ENCODE measurements at regions of chr2 and their contacts with region 1.

Region 1: GRCh38 chr2:20650880-20651730 is at the start of gene HS1BP3:
- DNase-seq: peak; percentile 97
- ATAC-seq: peak; percentile 95
- H3K4me3 Mint-ChIP-seq: peak within 1 kb of the TSS; percentile 87
- H3K27ac Mint-ChIP-seq: peak within 1 kb of the TSS; percentile 94
- H3K4me1 Mint-ChIP-seq: peaks cover 41% of the 10 kb centered on the region
- H3K27me3 Mint-ChIP-seq: peaks cover 3% of the 10 kb centered on the region
- CTCF ChIP-seq: no peak
- total RNA-seq, gene HS1BP3: 13.0 and 13.1 TPM in 2 replicates

Region 2: DNA sequence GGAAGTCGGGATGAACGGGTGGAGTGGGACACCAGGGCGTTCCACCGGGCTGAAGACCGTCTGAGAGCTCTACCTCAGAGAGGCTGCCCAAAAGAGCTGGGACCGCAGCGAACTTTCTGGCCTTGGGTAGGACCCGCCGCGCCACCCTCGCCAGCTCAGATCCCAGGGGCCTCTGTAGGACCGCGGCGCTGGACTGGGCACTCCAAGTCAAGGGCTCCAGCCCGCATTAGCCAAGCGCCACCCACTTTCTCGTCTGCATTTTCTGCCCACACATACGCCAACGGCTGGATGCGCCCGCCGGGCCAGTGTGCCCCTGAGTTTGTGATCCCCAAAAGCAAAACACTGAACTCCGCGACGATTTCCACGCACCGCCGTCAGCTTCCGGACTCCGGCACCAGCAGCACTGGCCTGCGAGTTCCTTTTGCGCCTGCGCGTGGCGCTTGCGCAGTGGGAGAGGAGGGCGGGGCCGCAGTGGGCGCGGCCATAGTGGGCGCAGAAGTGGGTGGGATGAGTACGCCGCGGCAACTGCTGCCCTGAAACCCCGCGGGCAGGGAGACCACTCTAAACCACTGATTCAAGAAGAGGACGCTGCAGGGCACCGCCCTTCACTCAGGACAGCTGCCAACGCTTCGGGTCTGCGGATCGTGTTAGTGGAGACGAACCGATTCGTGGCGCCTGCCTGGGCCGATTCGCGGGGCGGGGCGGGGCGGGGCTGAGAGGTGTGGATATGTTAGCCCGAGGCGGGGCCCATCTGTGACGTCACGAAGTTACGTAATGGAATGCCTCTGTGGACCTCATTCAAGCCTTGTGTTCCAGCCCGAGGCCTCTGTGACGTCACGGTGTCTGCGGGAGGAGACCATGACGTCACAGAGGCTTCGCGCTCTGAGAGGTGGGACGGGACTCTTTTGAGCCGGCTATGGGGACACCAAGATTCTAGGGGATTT is 1303.2 kb before region 1 on chr2:
- CTCF ChIA-PET with region 1: no interaction called
- POLR2A ChIA-PET with region 1: no interaction called
- intact Hi-C with region 1: loop called (anchors 5 kb)
- DNase-seq: peak; percentile 100
- ATAC-seq: peak; percentile 89
- H3K4me3 Mint-ChIP-seq: peak overlapping the region; percentile 98
- H3K27ac Mint-ChIP-seq: peak overlapping the region; percentile 98
- H3K4me1 Mint-ChIP-seq: peaks cover 35% of the 10 kb centered on the region
- H3K27me3 Mint-ChIP-seq: peaks cover 28% of the 10 kb centered on the region
- CTCF ChIP-seq: no peak

Region 3: GRCh38 chr2:20225294-20226151 is 425.6 kb before region 1 on chr2:
- CTCF ChIA-PET with region 1: no interaction called
- POLR2A ChIA-PET with region 1: no interaction called
- intact Hi-C with region 1: loop called (anchors 10 kb)
- DNase-seq: peak; percentile 33
- ATAC-seq: peak; percentile 62
- H3K4me3 Mint-ChIP-seq: peak overlapping the region; percentile 66
- H3K27ac Mint-ChIP-seq: no peak overlapping the region
- H3K4me1 Mint-ChIP-seq: peaks cover 12% of the 10 kb centered on the region
- H3K27me3 Mint-ChIP-seq: peaks cover 45% of the 10 kb centered on the region
- CTCF ChIP-seq: no peak

Region 4: GRCh38 chr2:20595431-20596192 is 55.5 kb before region 1 on chr2:
- CTCF ChIA-PET with region 1: interaction called, 4 read pairs
- POLR2A ChIA-PET with region 1: no interaction called
- intact Hi-C with region 1: loop called (anchors 2 kb)
- DNase-seq: peak; percentile 45
- ATAC-seq: peak; percentile 83
- H3K4me3 Mint-ChIP-seq: peak overlapping the region; percentile 72
- H3K27ac Mint-ChIP-seq: peak overlapping the region; percentile 82
- H3K4me1 Mint-ChIP-seq: peaks cover 38% of the 10 kb centered on the region
- H3K27me3 Mint-ChIP-seq: peaks cover 21% of the 10 kb centered on the region
- CTCF ChIP-seq: no peak

Region 5: DNA sequence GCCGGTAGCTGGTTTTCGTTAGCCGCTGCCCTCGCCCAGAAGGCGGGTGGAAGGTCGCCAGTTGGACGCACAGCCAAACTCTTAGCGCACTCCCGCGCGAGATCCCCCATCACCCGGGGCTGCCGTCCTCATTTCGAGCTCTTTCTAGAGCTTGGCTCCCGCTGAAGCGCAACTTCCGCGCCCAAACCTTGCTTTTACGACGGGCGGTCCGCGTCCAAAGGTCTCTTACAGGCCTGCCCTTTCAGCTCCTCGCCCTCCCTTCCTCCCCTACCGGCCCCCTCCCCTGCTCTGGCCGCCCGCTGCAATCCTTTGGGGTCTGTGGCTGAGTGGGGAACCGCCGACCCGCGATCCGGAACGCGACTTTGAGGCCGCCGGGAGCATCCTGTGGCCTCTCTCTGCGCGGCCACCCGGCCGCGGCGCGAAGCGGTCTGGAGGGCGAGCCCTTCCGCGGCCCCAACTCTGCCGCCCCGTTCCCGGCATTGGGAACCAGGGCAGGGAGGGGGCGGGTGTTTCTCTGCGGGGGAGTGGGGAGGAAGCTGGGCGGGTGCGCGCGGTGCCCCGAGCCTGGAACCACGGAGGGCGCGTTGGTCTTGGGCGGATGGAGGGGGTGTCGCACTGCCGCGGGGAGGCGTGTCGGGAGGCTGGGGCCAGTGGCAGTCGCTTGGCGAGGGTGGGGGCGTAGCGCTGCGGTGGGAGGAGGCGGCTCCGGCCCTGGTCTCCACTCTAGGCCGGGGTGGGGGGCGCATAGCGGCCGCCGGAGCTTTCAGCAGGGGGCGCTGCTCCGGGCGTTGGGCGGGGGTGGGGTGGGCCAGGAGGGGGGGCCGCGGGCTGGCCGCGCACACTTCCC is 15.4 kb after region 1 on chr2 and contains the start of gene GDF7:
- CTCF ChIA-PET with region 1: interaction called, 36 read pairs
- POLR2A ChIA-PET with region 1: interaction called, 36 read pairs
- intact Hi-C with region 1: loop called (anchors 1 kb)
- DNase-seq: peak; percentile 67
- ATAC-seq: peak; percentile 78
- H3K4me3 Mint-ChIP-seq: peak within 1 kb of the TSS; percentile 87
- H3K27ac Mint-ChIP-seq: peak within 1 kb of the TSS; percentile 82
- H3K4me1 Mint-ChIP-seq: peaks cover 32% of the 10 kb centered on the region
- H3K27me3 Mint-ChIP-seq: peaks cover 8% of the 10 kb centered on the region
- CTCF ChIP-seq: no peak
- total RNA-seq, gene GDF7: 5.9 and 6.7 TPM in 2 replicates

Region 6: DNA sequence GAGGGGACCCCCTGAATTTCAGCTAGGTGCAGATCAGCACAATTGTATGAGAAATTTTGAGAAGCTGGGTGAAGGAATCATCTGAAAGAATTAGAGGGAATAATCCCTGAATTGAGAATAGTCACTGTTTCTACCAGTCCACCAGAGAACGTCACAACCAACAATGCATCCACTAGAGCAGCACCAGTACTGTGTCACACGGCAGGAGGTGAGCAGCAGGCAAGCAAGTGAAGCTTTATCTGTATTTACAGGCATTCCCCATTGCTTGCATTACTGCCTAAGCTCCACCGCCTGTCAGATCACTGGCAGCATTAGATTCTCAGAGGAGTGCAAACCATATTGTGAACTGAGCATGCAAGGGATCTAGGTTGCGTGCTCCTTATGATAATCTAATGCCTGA is 56.5 kb after region 1 on chr2:
- CTCF ChIA-PET with region 1: no interaction called
- POLR2A ChIA-PET with region 1: no interaction called
- intact Hi-C with region 1: no loop called
- DNase-seq: no peak
- ATAC-seq: no peak
- H3K4me3 Mint-ChIP-seq: no peak overlapping the region
- H3K27ac Mint-ChIP-seq: no peak overlapping the region
- H3K4me1 Mint-ChIP-seq: peaks cover 4% of the 10 kb centered on the region
- H3K27me3 Mint-ChIP-seq: no peaks in the 10 kb centered on the region
- CTCF ChIP-seq: no peak

Region 7: GRCh38 chr2:20822535-20823490 is 171.7 kb after region 1 on chr2 and contains the start of gene LDAH:
- CTCF ChIA-PET with region 1: interaction called, 6 read pairs
- POLR2A ChIA-PET with region 1: interaction called, 11 read pairs
- intact Hi-C with region 1: loop called (anchors 1 kb)
- DNase-seq: peak; percentile 84
- ATAC-seq: peak; percentile 83
- H3K4me3 Mint-ChIP-seq: peak within 1 kb of the TSS; percentile 97
- H3K27ac Mint-ChIP-seq: peak within 1 kb of the TSS; percentile 97
- H3K4me1 Mint-ChIP-seq: peaks cover 21% of the 10 kb centered on the region
- H3K27me3 Mint-ChIP-seq: no peaks in the 10 kb centered on the region
- CTCF ChIP-seq: no peak
- total RNA-seq, gene LDAH: 31.2 and 31.7 TPM in 2 replicates

Measured in activated B cell treated with CpG ODN at 0.5 μM for 24 hours (primary cell).